SK-MEL-5 (cell line): ENCODE measurements at regions of chr17 and their contacts with region 1.

Region 1: DNA sequence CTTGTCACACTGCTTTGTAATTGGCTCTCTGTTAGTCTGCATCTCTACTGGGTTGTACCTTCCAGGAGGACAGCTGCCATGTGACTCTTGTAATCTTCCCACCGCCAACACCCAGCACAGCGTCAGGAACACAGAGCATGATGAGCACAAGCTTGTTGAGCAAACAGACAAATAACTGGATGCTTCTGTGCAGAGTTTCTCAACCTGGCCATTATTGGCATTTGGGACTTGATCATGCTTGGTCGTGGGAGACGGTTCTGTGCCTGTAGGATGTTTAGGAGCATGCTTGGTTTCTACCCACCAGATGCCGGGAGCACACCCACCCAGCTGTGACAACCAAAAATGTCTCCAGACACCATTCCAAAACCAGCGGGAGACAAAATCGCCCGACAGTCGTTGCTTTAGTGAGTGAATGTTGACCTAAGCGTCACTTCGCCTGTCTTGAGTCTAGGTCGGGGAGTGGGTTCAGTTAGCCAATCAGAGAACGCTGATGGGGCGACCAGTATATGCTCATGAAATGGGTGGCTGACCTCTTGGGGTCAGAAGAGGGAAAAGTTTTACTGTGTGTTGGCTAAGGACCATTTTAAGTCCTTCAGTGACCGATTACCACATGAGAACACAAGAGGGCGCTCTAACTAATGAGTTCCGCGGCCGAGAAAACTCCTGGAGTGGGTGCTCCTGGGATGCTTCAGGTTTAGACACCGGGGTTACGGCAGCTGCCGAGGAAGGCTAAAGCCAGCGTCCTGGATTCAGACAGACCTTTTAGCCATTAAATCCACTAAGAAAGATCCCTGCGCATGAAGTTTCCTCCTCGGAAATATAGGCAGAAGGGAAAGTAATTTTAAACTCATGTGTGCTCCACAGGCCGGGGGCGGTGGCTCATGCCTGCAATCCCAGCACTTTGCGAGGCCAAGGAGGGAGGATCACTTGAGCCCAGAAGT is 57.8 kb upstream of the TEX2 start:
- DNase-seq: peak; percentile 95

Region 2: DNA sequence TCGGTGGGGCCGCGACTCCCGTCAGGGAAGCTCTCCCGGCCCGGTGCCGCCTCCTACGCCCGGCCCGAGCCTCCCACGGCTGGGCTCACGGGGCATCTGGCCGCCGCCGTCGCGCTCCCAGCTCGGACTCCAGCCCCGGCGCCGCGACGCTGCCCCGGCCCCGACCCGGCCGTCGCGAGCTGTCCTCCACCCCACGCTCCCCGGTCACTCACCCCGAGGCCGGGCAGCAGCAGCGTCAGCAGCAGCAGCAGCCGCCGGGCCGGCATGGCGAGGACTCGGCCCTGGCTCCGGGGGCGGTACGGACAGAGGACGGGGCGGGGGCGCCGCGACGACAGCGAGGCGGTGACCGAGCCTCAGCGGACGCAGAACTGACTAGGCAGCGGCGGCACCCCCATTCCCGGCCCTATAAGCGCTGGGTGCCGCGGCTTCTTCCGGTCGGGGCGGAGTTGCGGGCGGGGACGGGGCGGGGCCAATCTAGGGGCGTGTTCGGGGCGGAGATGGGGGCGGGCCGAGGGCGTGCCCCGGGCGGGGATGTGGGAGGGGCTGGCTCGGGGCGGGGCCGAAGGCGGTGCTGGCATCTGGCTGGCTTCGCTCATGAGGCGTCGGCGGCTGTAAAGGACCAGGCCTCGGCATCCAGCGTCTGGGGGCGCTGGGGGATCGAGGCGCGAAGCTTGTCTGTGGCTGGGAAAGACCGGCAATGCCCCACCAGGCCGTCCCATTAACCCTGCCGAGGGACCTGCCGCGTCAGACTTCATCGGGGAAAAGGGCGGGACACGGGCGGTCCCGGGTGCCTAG is 190.9 kb before region 1 on chr17 and contains the start of gene ERN1:
- in situ Hi-C with region 1: no loop called
- DNase-seq: peak; percentile 91
- total RNA-seq, gene ERN1: 6.2 and 7.2 TPM in 2 replicates

Region 3: DNA sequence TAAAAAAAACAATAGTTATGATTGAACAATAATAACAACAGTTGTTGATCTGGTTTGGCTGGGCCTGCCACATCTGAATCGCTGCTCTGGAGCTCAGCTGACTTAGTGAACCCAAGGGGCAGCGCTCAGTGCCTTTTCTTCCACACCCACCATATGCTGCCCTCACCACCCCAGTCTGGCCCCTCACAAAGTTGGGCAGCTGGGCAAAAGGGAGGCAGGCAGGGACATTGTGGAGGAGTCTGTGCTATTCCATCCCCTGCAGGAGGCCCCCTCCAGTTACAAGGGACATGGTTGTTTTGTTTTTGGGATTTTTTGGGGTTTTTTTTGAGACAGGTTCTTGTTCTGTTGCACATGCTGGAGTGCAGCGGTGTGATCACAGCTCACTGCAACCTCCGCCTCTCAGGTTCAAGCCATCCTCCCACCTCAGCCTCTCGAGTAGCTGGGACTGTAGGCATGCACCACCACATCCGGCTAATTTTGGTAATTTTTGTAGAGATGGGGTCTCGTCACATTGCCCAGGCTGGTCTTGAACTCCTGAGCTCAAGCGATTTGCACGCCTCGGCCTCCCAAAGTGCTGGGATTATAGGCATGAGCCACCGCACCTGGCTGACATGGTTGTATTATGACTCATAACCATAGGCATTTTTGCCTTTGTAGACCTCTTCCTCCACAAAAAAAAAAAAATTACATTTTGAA is 78.3 kb after region 1 on chr17:
- in situ Hi-C with region 1: loop called (anchors 10 kb)
- DNase-seq: no peak